B cell (primary cell): ENCODE measurements at regions of chr9 and their contacts with region 1.

Region 1: GRCh38 chr9:95510709-95511615 is 5.8 kb downstream of the PTCH1 start:
- DNase-seq: peak; percentile 75
- ATAC-seq: peak; percentile 35
- H3K4me3 ChIP-seq: peak overlapping the region; percentile 17 to 78 (median 56)
- H3K4me3 Mint-ChIP-seq: peak overlapping the region; percentile 87
- H3K27ac ChIP-seq: no peak overlapping the region
- H3K27ac Mint-ChIP-seq: peak overlapping the region; percentile 67
- H3K4me1 ChIP-seq: peaks cover 54 to 55% of the 10 kb centered on the region in 2 donors
- H3K4me1 Mint-ChIP-seq: peaks cover 47% of the 10 kb centered on the region
- H3K27me3 ChIP-seq: peaks cover 0 to 74% (median 55%) of the 10 kb centered on the region in 4 experiments
- H3K27me3 Mint-ChIP-seq: peaks cover 47% of the 10 kb centered on the region
- CTCF ChIP-seq: no peak

Region 2: DNA sequence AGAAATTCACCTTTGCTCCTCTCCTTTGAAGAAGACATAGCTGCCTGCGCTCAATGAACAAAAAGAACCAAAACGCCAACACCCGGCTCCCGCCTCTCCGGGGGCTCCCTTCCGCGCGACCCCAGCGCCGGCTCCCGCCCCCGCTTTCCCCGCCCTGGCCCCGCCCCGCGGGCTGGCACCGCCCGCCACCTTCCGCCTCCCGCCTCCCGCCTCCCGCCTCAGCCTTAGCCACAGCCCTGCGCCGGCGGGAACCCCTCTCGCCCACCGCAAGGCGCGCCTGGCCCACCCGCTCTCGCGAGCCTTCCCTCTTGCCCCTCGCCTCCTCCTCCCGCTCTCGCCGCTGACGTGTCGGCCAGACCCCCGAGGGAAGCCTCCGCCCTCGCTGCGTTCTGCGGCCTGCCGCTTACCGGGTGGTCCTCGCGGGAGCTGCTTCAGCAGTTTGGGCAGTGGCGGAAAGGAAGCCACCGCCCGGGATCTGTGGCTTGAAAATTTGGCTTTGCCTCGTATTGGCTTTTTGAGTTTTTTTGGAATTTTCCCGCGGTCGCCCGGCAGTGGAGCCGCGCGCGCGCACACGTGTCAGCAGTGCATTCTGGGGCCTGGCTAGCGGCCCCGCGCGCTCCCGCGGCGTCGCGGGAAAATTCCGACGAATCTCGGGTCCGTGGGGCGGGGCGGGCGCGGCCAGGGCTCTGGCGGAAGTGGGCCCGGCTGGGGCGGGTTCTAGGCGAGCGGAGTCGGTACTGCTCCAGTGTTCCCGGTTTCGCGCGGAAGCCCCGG is 193.7 kb before region 1 on chr9 and contains the start of gene FANCC:
- CTCF ChIA-PET with region 1: no interaction called
- POLR2A ChIA-PET with region 1: no interaction called
- intact Hi-C with region 1: loop called (anchors 5 kb)
- DNase-seq: peak; percentile 92
- ATAC-seq: peak; percentile 82
- H3K4me3 ChIP-seq: peak within 1 kb of the TSS; percentile 72 to 98 (median 94)
- H3K4me3 Mint-ChIP-seq: peak within 1 kb of the TSS; percentile 94
- H3K27ac ChIP-seq: peak within 1 kb of the TSS; percentile 74 to 84
- H3K27ac Mint-ChIP-seq: peak within 1 kb of the TSS; percentile 93
- H3K4me1 ChIP-seq: peaks cover 14 to 16% of the 10 kb centered on the region in 2 donors
- H3K4me1 Mint-ChIP-seq: peaks cover 16% of the 10 kb centered on the region
- H3K27me3 ChIP-seq: peaks cover 0 to 6% (median 5%) of the 10 kb centered on the region in 4 experiments
- H3K27me3 Mint-ChIP-seq: peaks cover 4% of the 10 kb centered on the region
- CTCF ChIP-seq: no peak
- total RNA-seq, gene FANCC: 11.1 and 13.7 TPM in 2 replicates

Region 3: DNA sequence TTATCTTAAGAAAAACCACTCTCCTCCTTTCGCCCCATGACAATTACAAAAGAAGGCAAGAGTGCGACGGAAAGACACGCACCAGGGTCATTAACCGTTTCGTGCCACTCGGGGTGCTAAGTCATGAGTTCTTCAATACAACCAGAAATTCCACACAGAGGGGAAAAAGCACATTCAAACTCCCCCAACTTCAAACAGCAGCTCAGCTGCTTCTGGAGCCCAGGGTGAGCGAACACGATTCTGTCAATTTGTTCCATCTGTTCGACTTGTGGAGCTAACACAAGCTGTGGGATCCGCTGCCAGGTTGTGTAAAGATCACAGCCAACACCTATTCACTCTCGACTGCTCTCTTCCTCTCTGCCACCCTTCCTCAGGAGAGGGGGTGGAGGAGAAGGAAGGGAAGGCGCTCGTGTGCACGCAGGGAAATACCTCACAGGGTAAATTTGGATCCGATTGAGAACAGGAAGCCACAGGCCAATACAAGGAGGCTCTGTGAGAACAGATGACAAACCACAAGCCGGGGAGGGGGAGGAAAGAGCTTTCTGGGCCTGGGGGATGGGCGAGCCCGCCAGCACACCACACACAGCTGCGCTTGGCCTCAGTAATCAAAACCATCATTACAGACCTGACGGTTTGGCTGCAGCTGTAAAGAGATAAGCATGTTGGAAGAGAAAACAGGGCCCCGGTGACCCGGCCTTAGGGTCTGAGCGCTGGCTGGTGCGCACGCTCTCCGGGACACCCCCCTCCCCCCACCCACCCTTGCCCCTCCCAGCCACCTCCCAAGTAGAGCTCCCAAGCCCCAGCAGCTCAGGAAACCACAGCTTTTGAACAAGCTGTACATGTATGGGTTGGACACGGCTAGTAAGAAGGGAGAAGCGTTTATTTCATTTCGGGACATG is 48.5 kb before region 1 on chr9:
- CTCF ChIA-PET with region 1: interaction called, 3 read pairs
- POLR2A ChIA-PET with region 1: interaction called, 8 read pairs
- intact Hi-C with region 1: loop called (anchors 1 kb)
- DNase-seq: peak; percentile 80
- ATAC-seq: peak; percentile 97
- H3K4me3 ChIP-seq: peak overlapping the region in 3 of 5 experiments; percentile 3 to 52 (median 23)
- H3K4me3 Mint-ChIP-seq: peak overlapping the region; percentile 82
- H3K27ac ChIP-seq: no peak overlapping the region
- H3K27ac Mint-ChIP-seq: peak overlapping the region; percentile 18
- H3K4me1 ChIP-seq: peaks cover 19 to 24% of the 10 kb centered on the region in 2 donors
- H3K4me1 Mint-ChIP-seq: peaks cover 26% of the 10 kb centered on the region
- H3K27me3 ChIP-seq: peaks cover 0 to 20% (median 13%) of the 10 kb centered on the region in 4 experiments
- H3K27me3 Mint-ChIP-seq: peaks cover 54% of the 10 kb centered on the region
- CTCF ChIP-seq: no peak

Region 4: GRCh38 chr9:95494416-95495371 is 16.3 kb before region 1 on chr9:
- CTCF ChIA-PET with region 1: interaction called, 8 read pairs
- POLR2A ChIA-PET with region 1: interaction called, 7 read pairs
- intact Hi-C with region 1: loop called (anchors 1 kb)
- DNase-seq: peak; percentile 77
- ATAC-seq: peak; percentile 92
- H3K4me3 ChIP-seq: peak overlapping the region in 4 of 5 experiments; percentile 28 to 41 (median 36)
- H3K4me3 Mint-ChIP-seq: peak overlapping the region; percentile 89
- H3K27ac ChIP-seq: peak overlapping the region; percentile 35 to 64
- H3K27ac Mint-ChIP-seq: peak overlapping the region; percentile 95
- H3K4me1 ChIP-seq: peaks cover 14 to 20% of the 10 kb centered on the region in 2 donors
- H3K4me1 Mint-ChIP-seq: peaks cover 23% of the 10 kb centered on the region
- H3K27me3 ChIP-seq: peaks cover 0 to 4% (median 0%) of the 10 kb centered on the region in 4 experiments
- H3K27me3 Mint-ChIP-seq: peaks cover 35% of the 10 kb centered on the region
- CTCF ChIP-seq: no peak

Region 5: DNA sequence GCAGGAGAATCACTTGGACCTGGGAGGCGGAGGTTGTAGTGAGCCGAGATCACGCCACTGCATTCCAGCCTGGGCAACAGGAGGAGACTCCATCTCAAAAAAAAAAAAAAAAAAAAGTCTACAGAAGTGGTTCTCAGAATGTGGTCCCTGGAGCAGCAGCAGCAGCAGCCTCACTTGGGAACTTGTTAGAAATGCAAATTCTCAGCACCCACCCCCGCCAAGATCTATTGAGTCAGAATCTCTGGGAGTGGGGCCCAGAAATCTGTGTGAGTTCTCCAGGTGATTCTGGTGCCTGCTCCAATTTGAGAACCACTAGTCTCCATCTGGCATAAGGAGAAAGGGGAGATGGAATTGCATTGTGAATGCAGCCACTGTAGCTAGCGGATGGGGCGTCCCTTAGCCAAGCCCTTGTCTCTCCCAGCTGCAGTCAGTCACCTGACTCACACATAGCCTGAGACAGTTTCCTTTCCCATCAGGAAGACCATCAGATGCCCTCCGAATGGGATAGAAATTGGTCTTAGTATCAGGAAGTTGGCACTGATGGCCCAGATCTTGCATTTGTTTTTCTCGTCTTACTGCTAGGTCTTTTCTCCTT is 18.0 kb after region 1 on chr9:
- CTCF ChIA-PET with region 1: no interaction called
- POLR2A ChIA-PET with region 1: no interaction called
- intact Hi-C with region 1: no loop called
- DNase-seq: no peak
- ATAC-seq: no peak
- H3K4me3 ChIP-seq: no peak overlapping the region
- H3K4me3 Mint-ChIP-seq: no peak overlapping the region
- H3K27ac ChIP-seq: no peak overlapping the region
- H3K27ac Mint-ChIP-seq: no peak overlapping the region
- H3K4me1 ChIP-seq: no peaks in the 10 kb centered on the region
- H3K4me1 Mint-ChIP-seq: no peaks in the 10 kb centered on the region
- H3K27me3 ChIP-seq: peaks cover 0 to 12% (median 11%) of the 10 kb centered on the region in 4 experiments
- H3K27me3 Mint-ChIP-seq: peaks cover 50% of the 10 kb centered on the region
- CTCF ChIP-seq: no peak